ENCODE measurements at regions of chr1 and their contacts with region 1.

Region 1: DNA sequence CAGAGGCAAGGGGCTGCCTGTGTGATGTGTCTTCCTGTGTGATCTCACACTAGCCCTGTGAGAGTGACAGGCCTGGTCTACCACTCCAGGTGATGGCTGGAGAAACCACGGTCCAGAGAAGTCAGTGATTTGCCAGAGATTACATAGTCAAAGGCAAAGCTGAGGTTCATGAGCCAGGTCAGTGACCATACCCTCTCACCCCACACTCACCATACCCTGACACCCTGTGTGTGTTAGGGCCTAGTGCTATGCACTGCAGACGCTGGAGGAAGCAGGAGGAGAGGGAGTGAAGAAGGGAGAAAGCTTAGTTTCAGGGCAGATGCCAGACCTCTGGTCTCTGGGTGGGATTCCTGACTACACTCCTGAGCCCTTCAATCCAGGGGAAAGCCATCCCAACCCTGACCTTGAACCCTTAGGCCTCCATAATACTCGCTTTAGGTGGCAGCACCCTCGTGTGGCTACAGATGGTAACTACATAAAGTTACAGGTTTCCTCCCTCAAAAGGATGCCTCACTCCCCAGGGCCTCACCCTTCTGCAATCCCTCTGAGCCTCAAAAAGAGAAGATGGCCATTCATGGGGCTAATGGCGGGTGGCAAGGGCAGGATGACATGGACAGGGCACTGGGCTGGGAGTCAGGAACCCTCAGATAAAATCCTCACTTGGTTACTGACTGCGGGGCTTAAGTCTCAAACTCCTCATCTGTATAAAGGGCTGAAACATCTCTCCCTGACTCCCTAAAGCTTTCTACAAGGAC is 20.8 kb upstream of the SDC3 start:
- DNase-seq: peak; percentile 68
- CTCF ChIP-seq: peak; percentile 76

Region 2: GRCh38 chr1:30911046-30911954 is 18.0 kb before region 1 on chr1:
- CTCF ChIA-PET with region 1: interaction called, 37 read pairs
- POLR2A ChIA-PET with region 1: no interaction called
- DNase-seq: peak; percentile 78
- CTCF ChIP-seq: peak; percentile 74

Region 3: DNA sequence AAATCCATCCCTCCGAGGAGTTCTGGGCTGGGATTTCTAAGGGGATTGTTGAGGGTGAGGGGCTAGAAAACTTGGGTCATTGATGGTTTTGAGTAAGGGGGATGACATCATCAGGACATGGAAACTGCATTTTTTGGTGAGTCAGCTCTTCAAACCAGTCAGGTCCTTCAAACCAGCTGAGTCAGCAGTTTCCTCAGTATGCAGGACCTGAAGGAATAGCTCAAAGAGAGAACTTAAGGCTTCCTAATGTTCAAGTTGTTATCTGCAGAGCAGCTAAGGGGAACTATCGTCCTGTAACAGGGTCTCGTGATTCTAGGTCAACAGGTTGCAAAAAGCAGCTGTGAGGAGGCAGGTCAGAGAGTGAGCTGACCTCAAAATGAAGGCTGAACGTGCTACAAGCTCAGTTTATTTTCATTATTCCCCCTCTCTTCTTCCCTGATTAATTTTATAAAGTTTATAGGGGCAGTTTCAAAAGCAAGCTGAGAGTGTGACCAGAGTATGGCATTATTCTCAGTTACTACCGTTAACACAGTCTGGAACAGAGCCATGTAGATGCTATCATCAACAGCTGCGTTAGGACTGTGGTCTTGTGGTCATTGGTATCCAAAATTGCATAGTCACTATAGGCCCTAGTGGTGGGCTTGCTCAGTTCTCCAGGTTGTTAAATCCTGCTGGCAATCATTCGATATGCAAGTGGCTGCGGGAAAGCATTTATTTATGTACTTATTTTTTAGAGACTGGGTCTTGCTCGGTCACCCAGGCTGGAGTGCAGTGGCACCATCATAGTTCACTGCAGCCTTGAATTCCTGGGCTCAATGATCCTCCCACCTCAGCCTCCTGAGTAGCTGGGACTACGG is 10.1 kb before region 1 on chr1:
- CTCF ChIA-PET with region 1: interaction called, 47 read pairs
- POLR2A ChIA-PET with region 1: no interaction called
- DNase-seq: no peak
- CTCF ChIP-seq: no peak